ENCODE measurements at regions of chr11 and their contacts with region 1.

Region 1: GRCh38 chr11:1694064-1694845 is 2.7 kb upstream of the KRTAP5-6 start:
- DNase-seq: peak; percentile 74
- H3K4me3 Mint-ChIP-seq: no peak overlapping the region
- H3K27ac Mint-ChIP-seq: no peak overlapping the region
- H3K4me1 Mint-ChIP-seq: peaks cover 4% of the 10 kb centered on the region
- H3K27me3 Mint-ChIP-seq: peaks cover 17% of the 10 kb centered on the region

Region 2: DNA sequence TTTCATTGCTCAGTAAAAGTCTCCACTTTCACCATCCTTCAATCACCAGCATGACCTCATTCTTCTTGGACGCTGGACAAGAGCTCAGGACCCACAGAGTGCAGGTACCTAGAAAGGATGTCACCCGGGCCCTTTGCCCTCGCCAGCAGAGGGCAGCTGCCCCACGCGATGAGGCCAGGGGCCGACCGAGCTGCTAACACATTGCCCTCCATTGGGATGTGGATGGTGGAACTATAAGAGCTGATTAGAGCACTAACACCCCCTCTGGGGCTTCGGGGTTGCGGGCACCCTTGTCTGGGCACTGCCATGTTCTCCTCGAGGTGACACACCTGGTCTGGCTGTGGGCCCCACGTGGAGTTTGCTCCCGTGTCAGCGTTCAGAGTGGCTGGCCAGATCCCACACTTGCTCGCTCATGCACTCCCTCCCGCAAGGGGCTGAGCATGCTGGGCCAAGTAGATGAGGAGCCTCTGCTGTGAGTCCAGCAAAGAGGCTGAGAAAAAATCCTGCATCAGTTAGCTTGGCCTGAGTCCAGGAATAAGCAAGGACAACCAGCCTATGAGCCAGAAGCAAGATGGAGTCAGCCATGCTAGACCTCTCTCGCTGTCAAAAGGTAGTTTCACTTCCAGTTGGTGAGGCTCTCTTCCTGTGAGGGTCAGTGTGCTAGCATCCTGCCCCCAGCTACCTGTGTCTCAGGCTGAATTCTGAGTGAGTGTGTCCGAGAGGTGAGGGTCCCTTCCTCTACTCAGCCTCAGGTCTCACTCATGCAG is 12.6 kb after region 1 on chr11:
- CTCF ChIA-PET with region 1: interaction called, 11 read pairs
- POLR2A ChIA-PET with region 1: no interaction called
- DNase-seq: no peak
- H3K4me3 Mint-ChIP-seq: no peak overlapping the region
- H3K27ac Mint-ChIP-seq: peak overlapping the region; percentile 74
- H3K4me1 Mint-ChIP-seq: peaks cover 17% of the 10 kb centered on the region
- H3K27me3 Mint-ChIP-seq: peaks cover 12% of the 10 kb centered on the region

Region 3: GRCh38 chr11:1845561-1846452 is 151.6 kb after region 1 on chr11:
- CTCF ChIA-PET with region 1: interaction called, 18 read pairs
- POLR2A ChIA-PET with region 1: no interaction called
- DNase-seq: peak; percentile 41
- H3K4me3 Mint-ChIP-seq: peak overlapping the region; percentile 62
- H3K27ac Mint-ChIP-seq: peak overlapping the region; percentile 90
- H3K4me1 Mint-ChIP-seq: peaks cover 76% of the 10 kb centered on the region
- H3K27me3 Mint-ChIP-seq: no peaks in the 10 kb centered on the region

Region 4: GRCh38 chr11:2002807-2003206 is 308.6 kb after region 1 on chr11:
- CTCF ChIA-PET with region 1: interaction called, 51 read pairs
- POLR2A ChIA-PET with region 1: no interaction called
- DNase-seq: no peak
- H3K4me3 Mint-ChIP-seq: no peak overlapping the region
- H3K27ac Mint-ChIP-seq: no peak overlapping the region
- H3K4me1 Mint-ChIP-seq: no peaks in the 10 kb centered on the region
- H3K27me3 Mint-ChIP-seq: no peaks in the 10 kb centered on the region

Measured in activated CD4-positive, alpha-beta T cell treated with anti-CD3 and anti-CD28 coated beads, Interleukin-2, amount 10 ng/mL, durations not matched to agents 7 days and 5 days (primary cell).